Activated CD4-positive, alpha-beta memory T cell treated with anti-CD3 and anti-CD28 coated beads, Interleukin-2, amount 10 ng/mL, durations not matched to agents 7 days and 5 days (primary cell): ENCODE measurements at regions of chr17 and their contacts with region 1.

Region 1: DNA sequence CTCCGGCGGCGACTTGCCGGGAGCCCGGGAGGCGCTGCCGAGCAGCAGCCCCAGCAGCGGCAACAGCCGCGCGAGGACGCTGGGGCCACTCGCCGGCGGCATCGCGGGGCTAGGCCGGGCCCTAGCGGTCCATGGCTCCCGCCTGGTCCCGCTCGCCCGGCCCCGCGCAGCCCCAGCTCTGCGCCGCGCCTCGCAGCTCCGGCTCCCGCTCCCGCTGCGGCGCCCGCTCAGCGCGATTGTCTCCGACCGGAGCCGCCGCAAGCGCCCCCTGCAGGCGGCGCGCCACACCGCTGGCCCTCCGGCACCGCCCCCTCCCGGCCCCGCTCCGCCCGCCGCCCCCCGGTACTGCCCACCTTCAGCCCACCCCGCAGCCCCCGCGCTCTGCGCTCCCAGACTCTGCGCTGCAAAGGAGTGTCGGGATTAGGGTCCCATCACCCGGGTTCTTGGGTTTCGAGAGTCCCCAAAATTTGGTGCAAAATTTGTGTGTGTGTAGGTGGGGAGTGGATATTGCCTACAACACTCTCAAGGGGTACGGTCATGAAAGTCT is at the start of gene FAM171A2:
- DNase-seq: peak; percentile 68
- H3K4me3 Mint-ChIP-seq: peak within 1 kb of the TSS; percentile 70
- H3K27ac Mint-ChIP-seq: no peak within 1 kb of the TSS
- H3K4me1 Mint-ChIP-seq: peaks cover 3% of the 10 kb centered on the region
- H3K27me3 Mint-ChIP-seq: peaks cover 44% of the 10 kb centered on the region
- total RNA-seq, gene FAM171A2: 0.10 TPM in 1 of 2 experiments, not detected in the other

Region 2: DNA sequence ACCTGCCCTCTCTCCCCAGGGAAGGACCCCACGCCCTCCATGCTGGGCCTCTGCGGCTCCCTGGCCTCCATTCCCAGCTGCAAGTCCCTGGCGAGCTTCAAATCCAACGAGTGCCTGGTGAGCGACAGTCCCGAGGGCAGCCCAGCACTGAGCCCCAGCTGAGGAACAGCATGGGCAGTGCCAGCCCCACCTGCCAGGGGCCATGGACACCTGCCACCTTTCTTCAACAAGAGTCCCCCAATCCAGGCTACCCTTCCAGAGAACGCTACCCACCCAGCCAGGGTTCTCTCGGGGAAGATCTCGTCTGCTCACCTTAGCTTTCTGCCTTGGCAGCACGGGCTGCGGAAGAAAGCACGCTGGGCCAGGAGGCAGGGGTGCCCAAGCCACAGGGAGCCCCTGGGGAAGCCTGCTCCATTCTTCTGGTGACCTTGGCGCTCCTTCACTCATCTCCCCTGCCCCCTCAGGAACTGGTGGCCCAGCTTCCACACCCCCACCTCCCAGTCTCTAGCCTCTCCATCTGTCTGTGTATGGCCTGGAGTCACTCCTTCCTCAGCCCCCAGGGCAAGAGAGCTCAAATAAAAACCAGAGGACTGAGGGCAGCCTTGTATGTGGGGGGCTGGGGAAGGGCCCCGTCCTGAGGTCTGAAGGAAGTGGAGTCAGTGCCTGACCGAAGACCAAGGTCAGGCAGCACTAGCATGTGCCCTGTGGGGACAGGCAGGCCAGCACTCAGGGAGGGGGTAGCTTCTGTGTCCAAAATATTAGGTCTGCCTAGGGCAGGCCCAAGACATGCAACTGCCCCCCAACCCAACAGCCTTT is 45.4 kb before region 1 on chr17:
- CTCF ChIA-PET with region 1: no interaction called
- POLR2A ChIA-PET with region 1: no interaction called
- DNase-seq: no peak
- H3K4me3 Mint-ChIP-seq: no peak overlapping the region
- H3K27ac Mint-ChIP-seq: no peak overlapping the region
- H3K4me1 Mint-ChIP-seq: peaks cover 15% of the 10 kb centered on the region
- H3K27me3 Mint-ChIP-seq: peaks cover 32% of the 10 kb centered on the region

Region 3: GRCh38 chr17:44350733-44351226 is 12.9 kb before region 1 on chr17:
- CTCF ChIA-PET with region 1: interaction called, 17 read pairs
- POLR2A ChIA-PET with region 1: interaction called, 8 read pairs
- DNase-seq: peak; percentile 75
- H3K4me3 Mint-ChIP-seq: no peak overlapping the region
- H3K27ac Mint-ChIP-seq: no peak overlapping the region
- H3K4me1 Mint-ChIP-seq: peaks cover 23% of the 10 kb centered on the region
- H3K27me3 Mint-ChIP-seq: peaks cover 10% of the 10 kb centered on the region